Heart left ventricle (tissue), 16 donors: ENCODE measurements at regions of chr6 and their contacts with region 1.

Region 1: GRCh38 chr6:82247634-82248232 is at the start of gene IBTK:
- DNase-seq: peak; percentile 95 to 96 (median 96)
- ATAC-seq: peak; percentile 98 to 99 (median 99)
- H3K4me3 ChIP-seq: peak within 1 kb of the TSS; percentile 65 to 98 (median 78)
- H3K27ac ChIP-seq: peak within 1 kb of the TSS; percentile 88 to 97 (median 92)
- H3K4me1 ChIP-seq: peaks cover 0 to 48% (median 22%) of the 10 kb centered on the region in 12 donors
- H3K27me3 ChIP-seq: no peaks in the 10 kb centered on the region
- CTCF ChIP-seq: no peak
- POLR2A ChIP-seq: peak; percentile 46 to 78
- total RNA-seq, gene IBTK: 19.4 to 39.2 (median 29.2) TPM

Region 2: GRCh38 chr6:83215131-83216047 is 967.7 kb after region 1 on chr6:
- intact Hi-C with region 1: loop called in 2 of 10 experiments (anchors 5 to 10 kb)
- DNase-seq: peak; percentile 33 to 64 (median 62)
- ATAC-seq: peak; percentile 58 to 96 (median 93)
- H3K4me3 ChIP-seq: no peak overlapping the region
- H3K27ac ChIP-seq: no peak overlapping the region
- H3K4me1 ChIP-seq: peaks cover 0 to 10% (median 0%) of the 10 kb centered on the region in 12 donors
- H3K27me3 ChIP-seq: no peaks in the 10 kb centered on the region
- CTCF ChIP-seq: peak; percentile 51 to 88 (median 78)
- POLR2A ChIP-seq: no peak